Activated T-helper 1 cell treated with anti-CD3 and anti-CD28 coated beads, Interleukin-12 subunit alpha, Interleukin-12 subunit beta, Interleukin-2, Interleukin-4 antibody, amounts not matched to agents 30 ng/mL and 10 ng/mL and 1 ng/mL, durations not matched to agents 14 hours and 24 hours and 36 hours (primary cell): ENCODE measurements at regions of chr2 and their contacts with region 1.

Region 1: GRCh38 chr2:174835797-174836255 is 71.6 kb upstream of the CHRNA1 start:
- DNase-seq: no peak
- H3K4me3 Mint-ChIP-seq: peak overlapping the region; percentile 43
- H3K27ac Mint-ChIP-seq: peak overlapping the region; percentile 96
- H3K4me1 Mint-ChIP-seq: peaks cover 40% of the 10 kb centered on the region
- H3K27me3 Mint-ChIP-seq: no peaks in the 10 kb centered on the region

Region 2: DNA sequence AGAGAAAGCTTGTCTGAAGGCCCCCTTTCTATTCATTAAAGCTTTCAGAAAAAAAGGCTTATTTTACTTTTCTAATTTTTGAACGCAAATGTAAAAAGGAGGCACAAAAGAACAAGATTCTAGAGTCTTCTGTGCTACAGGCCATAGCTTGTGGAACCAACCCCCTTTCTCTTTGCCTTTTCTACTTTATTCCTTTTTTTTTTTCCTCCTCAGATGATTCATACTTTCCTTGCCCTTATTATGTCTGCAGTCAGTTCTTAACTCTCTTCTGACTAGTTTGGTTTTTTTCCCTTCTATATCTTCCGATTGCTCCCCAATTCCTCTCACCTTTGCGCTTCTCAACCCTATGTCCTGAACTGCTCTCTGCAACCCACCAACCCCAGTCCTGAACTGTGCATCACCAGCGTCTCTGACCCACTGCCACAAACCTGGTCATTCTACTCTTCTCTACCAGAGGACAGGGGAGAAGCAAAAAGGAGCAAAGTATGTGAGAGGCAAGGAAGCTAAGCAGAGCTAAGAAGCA is 181.3 kb before region 1 on chr2:
- intact Hi-C with region 1: no loop called
- DNase-seq: no peak
- H3K4me3 Mint-ChIP-seq: no peak overlapping the region
- H3K27ac Mint-ChIP-seq: peak overlapping the region; percentile 71
- H3K4me1 Mint-ChIP-seq: peaks cover 55% of the 10 kb centered on the region
- H3K27me3 Mint-ChIP-seq: no peaks in the 10 kb centered on the region

Region 3: DNA sequence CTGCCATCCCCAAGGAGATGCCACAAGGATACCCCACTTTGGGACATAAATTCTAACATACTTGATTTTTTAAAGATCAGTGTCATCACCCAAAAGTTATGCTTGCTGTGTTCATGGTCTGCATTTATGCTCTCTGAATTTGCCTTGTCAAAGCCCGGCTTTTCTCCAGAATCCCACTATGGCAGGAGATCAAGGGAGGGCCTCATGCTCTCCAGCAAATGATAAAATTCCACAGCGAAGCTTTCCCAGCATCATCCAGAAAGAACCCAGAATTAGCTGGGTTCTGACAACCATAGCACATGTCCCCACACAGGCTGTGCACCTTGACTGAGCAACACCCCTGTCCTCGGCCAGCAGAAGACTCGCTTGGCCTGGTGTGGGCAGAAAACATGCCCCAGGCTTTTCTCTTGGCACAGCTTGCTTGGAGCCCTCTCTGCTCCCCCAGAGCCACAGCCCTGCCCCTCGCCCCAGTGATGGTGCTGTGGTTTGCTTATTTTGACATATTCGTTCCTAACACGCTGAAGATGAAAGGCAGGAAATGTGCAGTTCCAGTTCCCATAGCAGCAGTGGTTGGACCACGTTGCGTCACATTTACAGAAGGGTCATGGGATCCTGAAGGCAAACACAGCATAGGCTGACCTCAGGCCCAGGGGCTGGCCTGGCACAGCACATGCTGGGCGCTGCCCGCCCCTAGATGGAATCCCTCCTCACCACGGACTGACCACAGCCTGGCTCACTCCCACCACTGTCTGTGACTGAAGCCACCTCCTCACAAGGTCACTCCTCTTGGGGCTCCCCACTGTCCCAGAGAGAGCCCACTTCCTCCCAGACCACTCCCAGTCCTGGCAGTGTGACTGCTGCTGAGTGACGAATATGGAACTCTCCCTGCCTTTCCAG is 57.5 kb before region 1 on chr2:
- intact Hi-C with region 1: loop called (anchors 1 kb)
- DNase-seq: peak; percentile 76
- H3K4me3 Mint-ChIP-seq: peak overlapping the region; percentile 58
- H3K27ac Mint-ChIP-seq: peak overlapping the region; percentile 83
- H3K4me1 Mint-ChIP-seq: peaks cover 50% of the 10 kb centered on the region
- H3K27me3 Mint-ChIP-seq: peaks cover 2% of the 10 kb centered on the region

Region 4: DNA sequence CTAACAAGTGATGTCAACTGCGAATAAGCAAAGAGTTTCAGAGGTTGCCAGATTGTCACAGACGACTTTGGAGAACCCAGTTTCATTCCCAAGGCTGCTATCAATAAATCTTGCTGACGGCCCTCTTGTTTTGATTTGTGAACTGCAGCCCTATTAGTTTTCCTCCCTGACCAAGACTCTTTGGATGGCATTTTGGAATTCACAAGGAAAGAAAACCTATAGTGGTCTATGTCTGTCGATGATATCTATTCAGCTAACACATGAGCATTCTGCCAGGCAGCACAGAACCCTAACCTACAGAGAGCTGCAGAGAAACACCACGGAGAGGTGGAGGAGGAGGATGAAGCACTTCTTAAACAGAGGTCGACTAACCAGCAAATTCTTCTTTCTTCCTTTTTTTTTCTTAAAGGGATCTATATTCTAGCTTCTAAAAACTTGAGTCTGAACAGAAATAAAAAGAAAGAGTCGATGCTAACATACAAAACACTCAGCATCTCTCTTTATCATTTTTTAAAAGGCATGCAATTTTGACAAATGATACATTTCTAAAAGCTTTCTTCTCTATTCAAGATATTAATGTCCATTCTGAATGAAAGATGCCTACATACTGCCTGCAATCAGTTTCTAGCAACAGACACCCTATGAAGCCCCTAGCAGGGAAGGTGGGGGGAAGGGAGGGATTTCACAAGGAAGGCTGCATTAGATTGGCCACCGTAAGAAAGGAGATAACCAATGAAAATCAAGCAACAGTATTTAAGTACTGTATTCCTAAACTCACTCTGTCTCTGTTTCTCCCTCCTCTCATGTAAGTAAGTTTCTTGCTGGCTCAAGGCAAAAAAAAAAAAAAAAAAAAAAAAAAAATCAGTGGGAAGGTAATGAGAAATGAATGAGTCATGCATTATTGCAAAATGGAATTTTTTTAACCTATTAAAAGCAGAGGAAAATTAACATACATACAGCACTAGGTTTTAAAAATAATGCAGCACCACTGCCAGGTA is 11.4 kb after region 1 on chr2:
- intact Hi-C with region 1: loop called (anchors 2 kb)
- DNase-seq: no peak
- H3K4me3 Mint-ChIP-seq: no peak overlapping the region
- H3K27ac Mint-ChIP-seq: no peak overlapping the region
- H3K4me1 Mint-ChIP-seq: peaks cover 20% of the 10 kb centered on the region
- H3K27me3 Mint-ChIP-seq: no peaks in the 10 kb centered on the region

Region 5: GRCh38 chr2:174919947-174920595 is 84.2 kb after region 1 on chr2:
- intact Hi-C with region 1: no loop called
- DNase-seq: no peak
- H3K4me3 Mint-ChIP-seq: no peak overlapping the region
- H3K27ac Mint-ChIP-seq: no peak overlapping the region
- H3K4me1 Mint-ChIP-seq: no peaks in the 10 kb centered on the region
- H3K27me3 Mint-ChIP-seq: no peaks in the 10 kb centered on the region

Region 6: GRCh38 chr2:174971865-174972781 is 136.3 kb after region 1 on chr2:
- intact Hi-C with region 1: no loop called
- DNase-seq: no peak
- H3K4me3 Mint-ChIP-seq: no peak overlapping the region
- H3K27ac Mint-ChIP-seq: no peak overlapping the region
- H3K4me1 Mint-ChIP-seq: no peaks in the 10 kb centered on the region
- H3K27me3 Mint-ChIP-seq: peaks cover 5% of the 10 kb centered on the region

Region 7: GRCh38 chr2:175154661-175155082 is 318.8 kb after region 1 on chr2:
- intact Hi-C with region 1: loop called (anchors 5 kb)
- DNase-seq: no peak
- H3K4me3 Mint-ChIP-seq: peak overlapping the region; percentile 41
- H3K27ac Mint-ChIP-seq: peak overlapping the region; percentile 92
- H3K4me1 Mint-ChIP-seq: peaks cover 31% of the 10 kb centered on the region
- H3K27me3 Mint-ChIP-seq: no peaks in the 10 kb centered on the region